ENCODE measurements at regions of chr2 and their contacts with region 1.

Region 1: DNA sequence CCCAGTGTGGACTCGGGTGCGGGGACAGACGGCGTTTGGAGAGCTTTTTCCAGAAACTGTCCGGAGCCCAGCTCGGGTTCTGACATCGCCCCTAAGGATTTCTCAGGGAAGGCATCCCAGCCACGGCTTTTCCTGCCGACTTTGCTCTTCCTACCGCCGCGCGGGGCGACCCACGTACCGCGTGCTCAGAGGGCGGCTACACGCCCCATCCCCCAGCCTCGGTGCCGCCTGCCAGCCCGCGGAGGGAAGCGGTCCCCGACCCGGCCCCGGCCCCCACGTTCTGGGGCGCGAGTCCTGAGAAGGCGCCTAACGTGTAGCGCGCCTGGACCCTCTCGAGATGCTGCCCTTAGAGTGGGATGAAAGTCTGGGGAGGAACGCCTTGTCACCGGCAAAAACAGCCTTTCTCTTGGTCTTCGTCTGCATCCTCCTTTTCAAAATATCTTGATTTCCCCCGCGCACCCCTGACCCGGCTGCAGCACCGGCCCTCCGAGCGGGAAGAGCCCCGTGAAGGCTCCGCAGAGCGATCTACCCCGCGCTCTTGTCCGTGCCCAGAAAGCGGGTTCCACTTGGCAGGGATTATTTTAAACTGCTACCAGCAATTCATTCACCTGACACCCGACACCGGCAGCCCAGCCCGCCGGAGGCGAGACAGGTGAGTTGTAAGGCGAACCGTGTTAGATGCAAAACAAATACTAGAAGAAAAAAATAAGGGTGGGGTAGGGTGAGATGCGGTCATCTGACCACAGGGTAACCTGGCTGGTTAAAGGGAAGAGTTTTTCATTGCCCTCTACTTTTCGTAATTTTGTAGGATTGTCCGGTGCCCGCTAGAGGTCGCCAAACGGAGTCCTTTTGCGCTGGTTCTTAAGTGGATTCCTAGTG is 812 bp upstream of the KCNG3 start:
- DNase-seq: peak; percentile 90
- H3K4me3 Mint-ChIP-seq: peak overlapping the region; percentile 94
- H3K27ac Mint-ChIP-seq: no peak overlapping the region
- H3K4me1 Mint-ChIP-seq: peaks cover 6% of the 10 kb centered on the region
- H3K27me3 Mint-ChIP-seq: peaks cover 10% of the 10 kb centered on the region

Region 2: DNA sequence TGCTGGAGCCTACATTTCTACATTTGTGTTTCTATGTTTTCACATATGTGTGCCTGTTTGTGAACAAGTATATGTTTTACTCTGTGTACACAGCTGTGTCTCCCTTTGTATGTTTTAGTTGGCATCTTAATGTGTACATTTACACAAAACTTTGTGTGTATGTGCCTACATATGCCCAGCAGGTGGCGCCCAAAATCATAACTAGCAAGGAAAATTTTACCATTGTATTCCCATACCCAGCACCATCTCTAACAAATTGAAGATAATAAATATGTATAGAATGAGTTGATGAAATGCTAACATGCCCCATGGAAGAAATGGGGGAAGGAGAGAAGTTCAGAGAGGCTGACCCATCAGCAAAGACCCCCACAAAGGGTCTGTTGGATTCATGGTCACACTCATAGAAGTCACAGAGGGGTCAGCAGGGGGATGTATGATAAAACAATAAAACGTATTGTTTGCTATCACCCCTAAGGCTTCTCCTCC is 398.6 kb before region 1 on chr2:
- CTCF ChIA-PET with region 1: no interaction called
- intact Hi-C with region 1: loop called (anchors 2 kb)
- DNase-seq: peak; percentile 89
- H3K4me3 Mint-ChIP-seq: no peak overlapping the region
- H3K27ac Mint-ChIP-seq: no peak overlapping the region
- H3K4me1 Mint-ChIP-seq: peaks cover 24% of the 10 kb centered on the region
- H3K27me3 Mint-ChIP-seq: no peaks in the 10 kb centered on the region

Region 3: DNA sequence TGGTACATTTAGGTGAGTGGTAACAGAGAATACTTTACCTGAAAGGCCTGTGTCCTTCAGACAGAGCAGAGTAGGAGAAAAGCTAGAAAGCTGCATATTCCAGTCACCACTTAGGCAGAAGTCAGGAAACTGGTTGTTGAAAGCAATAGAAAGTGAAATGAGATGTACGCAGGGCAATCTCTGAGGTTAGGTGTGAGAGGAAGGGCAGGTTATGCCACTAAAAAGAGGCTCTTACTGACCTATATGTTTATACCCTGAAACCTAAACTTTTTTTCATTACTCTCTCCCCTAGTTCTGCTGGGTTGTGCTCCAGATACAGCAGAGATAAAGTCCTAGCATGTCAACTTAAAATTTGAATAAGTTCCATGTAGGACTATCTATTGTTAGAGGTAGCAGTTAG is 227.1 kb before region 1 on chr2:
- CTCF ChIA-PET with region 1: no interaction called
- intact Hi-C with region 1: no loop called
- DNase-seq: no peak
- H3K4me3 Mint-ChIP-seq: no peak overlapping the region
- H3K27ac Mint-ChIP-seq: peak overlapping the region; percentile 17
- H3K4me1 Mint-ChIP-seq: peaks cover 21% of the 10 kb centered on the region
- H3K27me3 Mint-ChIP-seq: no peaks in the 10 kb centered on the region

Region 4: GRCh38 chr2:42568401-42569115 is 74.0 kb after region 1 on chr2 and contains the start of gene MTA3:
- CTCF ChIA-PET with region 1: no interaction called
- intact Hi-C with region 1: loop called (anchors 1 kb)
- DNase-seq: peak; percentile 66
- H3K4me3 Mint-ChIP-seq: peak within 1 kb of the TSS; percentile 88
- H3K27ac Mint-ChIP-seq: peak within 1 kb of the TSS; percentile 90
- H3K4me1 Mint-ChIP-seq: peaks cover 26% of the 10 kb centered on the region
- H3K27me3 Mint-ChIP-seq: no peaks in the 10 kb centered on the region
- total RNA-seq, gene MTA3: 31.9 to 38.0 TPM

Region 5: DNA sequence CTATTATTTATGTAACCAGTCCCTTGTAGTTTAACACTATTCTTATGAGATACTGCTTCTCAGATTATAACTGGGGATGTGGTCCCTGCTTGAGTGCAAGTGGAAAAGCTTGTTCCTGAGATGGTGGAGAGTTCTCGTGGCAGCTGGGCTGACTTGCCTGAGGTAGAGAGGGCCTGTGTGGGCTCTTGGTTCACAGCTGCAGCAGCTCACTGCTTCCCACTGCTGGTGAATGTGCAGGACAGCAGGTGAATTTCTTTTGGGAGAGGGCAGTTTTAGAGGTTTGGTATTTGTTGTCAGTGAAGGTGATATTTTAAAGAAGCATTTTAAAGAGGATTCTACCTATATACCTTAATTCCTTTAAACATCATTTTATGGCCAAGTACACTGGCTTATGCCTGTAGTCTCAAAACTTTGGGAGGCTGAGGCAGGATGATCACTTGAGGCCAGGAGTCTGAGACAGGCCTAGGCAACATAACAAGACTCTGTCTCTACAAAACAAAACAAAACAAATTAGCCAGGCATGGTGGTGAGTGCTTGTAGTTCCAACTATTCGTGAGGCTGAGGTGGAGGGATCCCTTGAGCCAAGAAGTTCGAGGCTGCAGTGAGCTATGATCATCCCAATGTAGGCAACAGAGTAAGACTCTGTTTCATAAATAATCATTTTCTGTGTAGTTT is 168.6 kb after region 1 on chr2:
- CTCF ChIA-PET with region 1: interaction called, 30 read pairs
- intact Hi-C with region 1: loop called (anchors 1 kb)
- DNase-seq: peak; percentile 80
- H3K4me3 Mint-ChIP-seq: no peak overlapping the region
- H3K27ac Mint-ChIP-seq: peak overlapping the region; percentile 57
- H3K4me1 Mint-ChIP-seq: peaks cover 17% of the 10 kb centered on the region
- H3K27me3 Mint-ChIP-seq: no peaks in the 10 kb centered on the region

Region 6: DNA sequence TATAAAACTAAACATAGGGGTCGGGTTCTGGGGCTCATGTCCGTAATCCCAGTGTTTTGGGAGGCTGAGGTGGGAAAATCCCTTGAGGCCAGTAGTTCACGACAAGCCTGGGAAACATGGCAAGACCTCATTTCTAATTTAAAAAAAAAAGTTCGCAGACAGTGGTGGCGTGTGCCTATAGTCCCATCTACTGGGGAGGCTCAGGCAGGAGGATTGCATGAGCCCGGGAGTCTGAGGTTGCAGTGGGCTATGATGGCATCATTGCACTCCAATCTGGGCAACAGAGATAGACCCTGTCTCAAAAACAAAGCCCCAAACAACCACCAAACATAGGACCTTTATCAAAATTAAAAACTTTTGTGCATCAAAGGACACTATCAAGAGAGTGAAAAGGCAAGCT is 307.6 kb after region 1 on chr2:
- CTCF ChIA-PET with region 1: interaction called, 7 read pairs
- intact Hi-C with region 1: loop called (anchors 2 kb)
- DNase-seq: no peak
- H3K4me3 Mint-ChIP-seq: no peak overlapping the region
- H3K27ac Mint-ChIP-seq: no peak overlapping the region
- H3K4me1 Mint-ChIP-seq: peaks cover 2% of the 10 kb centered on the region
- H3K27me3 Mint-ChIP-seq: no peaks in the 10 kb centered on the region

Measured in activated naive CD4-positive, alpha-beta T cell treated with anti-CD3 and anti-CD28 coated beads for 36 hours (primary cell).